PC-3 (cell line): ENCODE measurements at regions of chr14 and their contacts with region 1.

Region 1: DNA sequence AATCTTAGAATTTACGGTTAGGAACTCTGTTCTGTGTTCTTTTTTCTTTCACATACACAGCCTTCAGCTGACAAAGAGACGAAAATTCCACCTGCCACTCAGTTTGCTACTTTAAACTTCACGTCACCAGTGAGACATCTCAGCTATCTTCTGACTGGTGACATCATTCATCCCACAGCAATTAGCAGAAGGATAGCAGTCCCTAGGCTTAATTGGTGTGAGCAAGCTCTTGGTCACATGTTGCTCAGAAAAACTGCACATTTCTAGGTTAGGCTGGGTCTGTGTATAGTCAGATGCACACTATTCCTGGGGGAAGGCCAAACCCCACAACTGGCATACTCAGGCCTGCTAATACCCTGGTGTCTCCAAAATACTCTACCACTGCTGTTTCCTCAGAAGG is 23.9 kb downstream of the SLC7A7 start:
- DNase-seq: peak; percentile 50
- ATAC-seq: peak; percentile 57
- H3K4me3 ChIP-seq: no peak overlapping the region
- H3K27ac ChIP-seq: no peak overlapping the region
- H3K4me1 ChIP-seq: peaks cover 18% of the 10 kb centered on the region
- H3K27me3 ChIP-seq: no peaks in the 10 kb centered on the region
- CTCF ChIP-seq: no peak

Region 2: GRCh38 chr14:22231018-22231417 is 560.3 kb before region 1 on chr14:
- CTCF ChIA-PET with region 1: no interaction called
- POLR2A ChIA-PET with region 1: interaction called, 21 read pairs
- intact Hi-C with region 1: no loop called
- DNase-seq: no peak
- ATAC-seq: no peak
- H3K4me3 ChIP-seq: no peak overlapping the region
- H3K27ac ChIP-seq: no peak overlapping the region
- H3K4me1 ChIP-seq: peaks cover 8% of the 10 kb centered on the region
- H3K27me3 ChIP-seq: no peaks in the 10 kb centered on the region
- CTCF ChIP-seq: no peak